ENCODE measurements at regions of chr11 and their contacts with region 1.

Region 1: GRCh38 chr11:71080239-71081097 is 171.9 kb downstream of the SHANK2 start:
- DNase-seq: peak; percentile 86
- H3K4me3 ChIP-seq: no peak overlapping the region; a peak in 1 of 4 replicates
- H3K27ac ChIP-seq: no peak overlapping the region
- H3K4me1 ChIP-seq: no peaks in the 10 kb centered on the region
- H3K27me3 ChIP-seq: no peaks in the 10 kb centered on the region
- CTCF ChIP-seq: peak; percentile 39
- EP300 ChIP-seq: no peak
- RAD21 ChIP-seq: peak; percentile 86

Region 2: GRCh38 chr11:70467201-70468085 is 613.0 kb before region 1 on chr11:
- CTCF ChIA-PET with region 1: interaction called, 13 read pairs
- POLR2A ChIA-PET with region 1: no interaction called
- DNase-seq: peak; percentile 85
- H3K4me3 ChIP-seq: peak overlapping the region in 1 of 2 experiments; percentile 38; a peak in 1 of 4 replicates
- H3K27ac ChIP-seq: no peak overlapping the region
- H3K4me1 ChIP-seq: no peaks in the 10 kb centered on the region; a peak in 1 of 4 replicates
- H3K27me3 ChIP-seq: no peaks in the 10 kb centered on the region
- CTCF ChIP-seq: peak; percentile 68
- EP300 ChIP-seq: no peak
- RAD21 ChIP-seq: peak; percentile 99

Region 3: DNA sequence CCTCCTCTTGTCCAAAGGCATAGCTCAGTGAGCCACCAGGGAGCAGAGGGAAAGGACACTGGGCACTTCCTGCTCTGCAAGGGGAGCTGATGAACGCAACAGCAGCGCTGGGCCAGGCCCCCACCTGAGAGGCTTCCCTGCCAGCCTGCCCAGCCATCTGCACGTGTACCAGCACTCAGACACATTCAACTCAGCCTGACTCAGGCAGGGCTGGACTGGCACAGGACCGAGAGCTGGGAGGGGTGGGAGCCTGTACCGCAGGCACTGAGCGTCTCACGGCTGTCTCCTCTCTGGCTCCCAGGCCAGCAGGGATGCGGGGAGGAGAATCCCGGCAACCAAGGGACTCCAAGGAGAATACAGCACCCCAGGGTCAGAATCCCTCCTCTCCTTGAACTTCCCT is 270.3 kb before region 1 on chr11:
- CTCF ChIA-PET with region 1: interaction called, 29 read pairs
- POLR2A ChIA-PET with region 1: no interaction called
- DNase-seq: no peak
- H3K4me3 ChIP-seq: no peak overlapping the region
- H3K27ac ChIP-seq: no peak overlapping the region
- H3K4me1 ChIP-seq: no peaks in the 10 kb centered on the region
- H3K27me3 ChIP-seq: no peaks in the 10 kb centered on the region
- CTCF ChIP-seq: no peak
- EP300 ChIP-seq: no peak
- RAD21 ChIP-seq: no peak

Region 4: GRCh38 chr11:71112454-71112853 is 32.0 kb after region 1 on chr11:
- CTCF ChIA-PET with region 1: no interaction called
- POLR2A ChIA-PET with region 1: no interaction called
- DNase-seq: no peak
- H3K4me3 ChIP-seq: no peak overlapping the region
- H3K27ac ChIP-seq: no peak overlapping the region
- H3K4me1 ChIP-seq: no peaks in the 10 kb centered on the region; a peak in 1 of 4 replicates
- H3K27me3 ChIP-seq: no peaks in the 10 kb centered on the region
- CTCF ChIP-seq: no peak
- EP300 ChIP-seq: no peak
- RAD21 ChIP-seq: no peak

Region 5: DNA sequence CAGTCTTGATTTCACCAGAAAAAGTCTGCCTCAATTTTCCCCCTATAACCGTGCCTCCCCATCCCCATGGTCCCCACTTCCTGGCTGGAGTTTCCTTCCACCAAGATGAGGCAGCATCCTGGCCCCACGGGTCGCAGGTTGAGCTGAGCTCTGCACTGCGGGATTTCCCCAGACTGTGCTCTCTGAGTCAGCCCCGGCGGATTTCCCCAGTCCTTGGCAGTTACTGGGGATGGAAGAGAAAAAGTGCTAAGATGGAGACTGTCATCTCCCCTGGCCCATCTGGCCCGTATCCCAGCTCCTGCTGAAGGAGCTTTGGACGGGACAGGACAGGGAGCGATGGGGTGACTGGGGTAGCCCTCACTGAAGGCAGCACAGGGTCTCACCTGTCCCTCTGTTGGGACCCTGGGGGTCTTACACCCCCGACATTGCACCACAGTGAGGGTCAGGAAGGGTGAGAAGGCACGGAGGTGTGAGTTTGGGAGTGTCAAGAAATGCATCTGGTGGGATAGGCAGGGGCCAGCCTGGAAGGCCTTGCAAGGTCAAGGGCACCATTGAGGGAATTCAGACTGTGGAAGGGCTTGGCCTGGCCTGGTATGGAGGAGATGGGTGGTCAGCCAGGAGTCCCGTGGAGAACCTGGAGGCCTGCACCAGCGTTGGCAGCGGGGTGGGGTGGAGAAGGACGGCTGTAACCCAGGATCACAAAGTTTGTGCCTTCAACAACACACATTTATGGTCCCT is 409.0 kb after region 1 on chr11:
- CTCF ChIA-PET with region 1: no interaction called
- POLR2A ChIA-PET with region 1: no interaction called
- DNase-seq: no peak
- H3K4me3 ChIP-seq: no peak overlapping the region
- H3K27ac ChIP-seq: no peak overlapping the region; a peak in 1 of 4 replicates
- H3K4me1 ChIP-seq: peaks cover 10 to 18% of the 10 kb centered on the region in 2 experiments; a peak in 3 of 4 replicates
- H3K27me3 ChIP-seq: no peaks in the 10 kb centered on the region
- CTCF ChIP-seq: no peak
- EP300 ChIP-seq: no peak
- RAD21 ChIP-seq: no peak